ENCODE measurements at regions of chr2 and their contacts with region 1.

Region 1: GRCh38 chr2:203014456-203015199 is at the start of gene NBEAL1:
- DNase-seq: peak; percentile 86 to 99 (median 94)
- ATAC-seq: peak; percentile 87
- H3K4me3 ChIP-seq: peak within 1 kb of the TSS; percentile 88
- H3K4me3 Mint-ChIP-seq: peak within 1 kb of the TSS; percentile 93
- H3K27ac ChIP-seq: peak within 1 kb of the TSS; percentile 64 to 86
- H3K27ac Mint-ChIP-seq: peak within 1 kb of the TSS; percentile 93
- H3K4me1 ChIP-seq: peaks cover 15% of the 10 kb centered on the region
- H3K4me1 Mint-ChIP-seq: peaks cover 50% of the 10 kb centered on the region
- H3K27me3 ChIP-seq: no peaks in the 10 kb centered on the region
- H3K27me3 Mint-ChIP-seq: no peaks in the 10 kb centered on the region
- CTCF ChIP-seq: no peak
- total RNA-seq, gene NBEAL1: 8.3 to 11.2 TPM

Region 2: DNA sequence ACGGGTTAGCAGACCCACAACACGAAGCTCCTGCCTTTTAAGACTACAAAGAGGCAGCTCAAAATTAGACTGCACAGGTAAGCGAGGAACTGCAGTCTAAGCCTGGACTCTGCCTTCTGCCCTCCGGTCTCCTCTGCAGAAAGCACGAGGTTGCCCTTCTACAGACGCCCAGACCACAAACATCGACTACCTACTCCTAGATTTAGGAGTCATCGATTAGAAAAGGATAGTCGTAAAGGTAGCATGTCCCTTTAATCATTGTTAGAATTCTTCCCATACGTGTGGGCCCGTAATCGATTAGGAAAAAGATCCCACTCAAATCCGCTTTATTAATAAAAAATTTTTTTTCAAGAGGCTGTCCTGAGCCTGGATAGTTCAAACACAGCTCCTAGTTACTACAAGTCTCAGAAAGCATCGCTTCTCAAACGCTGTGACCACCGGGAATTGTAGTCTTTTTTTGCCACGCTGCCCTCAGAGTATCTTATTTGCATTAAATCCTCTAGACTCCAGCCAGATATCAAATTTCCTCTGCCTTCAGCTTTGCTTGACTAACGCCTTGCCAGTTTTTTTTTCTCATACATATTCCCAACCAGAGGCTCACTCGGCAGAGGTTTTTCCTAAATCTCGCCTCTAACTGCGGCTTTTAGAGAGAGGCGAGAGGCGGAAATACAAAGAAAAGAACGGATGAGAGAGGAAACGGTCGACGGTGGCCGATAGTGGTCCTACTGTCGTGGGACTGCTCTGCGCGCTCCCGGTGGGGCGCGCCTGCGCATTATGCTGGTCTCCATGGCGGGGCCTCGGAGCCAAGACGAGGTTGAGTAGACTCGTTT is 102.9 kb before region 1 on chr2 and contains the starts of genes CARF and WDR12:
- CTCF ChIA-PET with region 1: no interaction called
- POLR2A ChIA-PET with region 1: interaction called, 6 read pairs
- intact Hi-C with region 1: loop called (anchors 5 kb)
- DNase-seq: peak; percentile 80 to 95 (median 86)
- ATAC-seq: peak; percentile 81
- H3K4me3 ChIP-seq: peak within 1 kb of the TSS; percentile 79
- H3K4me3 Mint-ChIP-seq: peak within 1 kb of the TSS; percentile 98
- H3K27ac ChIP-seq: peak within 1 kb of the TSS; percentile 72 to 85
- H3K27ac Mint-ChIP-seq: peak within 1 kb of the TSS; percentile 90
- H3K4me1 ChIP-seq: peaks cover 9% of the 10 kb centered on the region
- H3K4me1 Mint-ChIP-seq: peaks cover 40% of the 10 kb centered on the region
- H3K27me3 ChIP-seq: no peaks in the 10 kb centered on the region
- H3K27me3 Mint-ChIP-seq: no peaks in the 10 kb centered on the region
- CTCF ChIP-seq: no peak
- total RNA-seq, gene CARF: 9.0 to 9.6 TPM
- total RNA-seq, gene WDR12: 6.2 to 7.7 TPM

Region 3: GRCh38 chr2:203135105-203135504 is 120.5 kb after region 1 on chr2:
- CTCF ChIA-PET with region 1: no interaction called
- POLR2A ChIA-PET with region 1: no interaction called
- intact Hi-C with region 1: no loop called
- DNase-seq: no peak
- ATAC-seq: no peak
- H3K4me3 ChIP-seq: no peak overlapping the region
- H3K4me3 Mint-ChIP-seq: no peak overlapping the region
- H3K27ac ChIP-seq: no peak overlapping the region
- H3K27ac Mint-ChIP-seq: no peak overlapping the region
- H3K4me1 ChIP-seq: no peaks in the 10 kb centered on the region
- H3K4me1 Mint-ChIP-seq: no peaks in the 10 kb centered on the region
- H3K27me3 ChIP-seq: no peaks in the 10 kb centered on the region
- H3K27me3 Mint-ChIP-seq: no peaks in the 10 kb centered on the region
- CTCF ChIP-seq: no peak

Region 4: GRCh38 chr2:203934041-203934492 is 919.4 kb after region 1 on chr2:
- CTCF ChIA-PET with region 1: no interaction called
- POLR2A ChIA-PET with region 1: no interaction called
- intact Hi-C with region 1: loop called in 1 of 2 experiments (anchors 10 kb)
- DNase-seq: peak in 9 of 14 experiments; percentile 32 to 71 (median 50)
- ATAC-seq: peak; percentile 40
- H3K4me3 ChIP-seq: peak overlapping the region; percentile 19
- H3K4me3 Mint-ChIP-seq: peak overlapping the region; percentile 83
- H3K27ac ChIP-seq: peak overlapping the region; percentile 67 to 82
- H3K27ac Mint-ChIP-seq: peak overlapping the region; percentile 93
- H3K4me1 ChIP-seq: peaks cover 41% of the 10 kb centered on the region
- H3K4me1 Mint-ChIP-seq: peaks cover 72% of the 10 kb centered on the region
- H3K27me3 ChIP-seq: no peaks in the 10 kb centered on the region
- H3K27me3 Mint-ChIP-seq: no peaks in the 10 kb centered on the region
- CTCF ChIP-seq: no peak